ENCODE measurements at regions of chr1 and their contacts with region 1.

Region 1: DNA sequence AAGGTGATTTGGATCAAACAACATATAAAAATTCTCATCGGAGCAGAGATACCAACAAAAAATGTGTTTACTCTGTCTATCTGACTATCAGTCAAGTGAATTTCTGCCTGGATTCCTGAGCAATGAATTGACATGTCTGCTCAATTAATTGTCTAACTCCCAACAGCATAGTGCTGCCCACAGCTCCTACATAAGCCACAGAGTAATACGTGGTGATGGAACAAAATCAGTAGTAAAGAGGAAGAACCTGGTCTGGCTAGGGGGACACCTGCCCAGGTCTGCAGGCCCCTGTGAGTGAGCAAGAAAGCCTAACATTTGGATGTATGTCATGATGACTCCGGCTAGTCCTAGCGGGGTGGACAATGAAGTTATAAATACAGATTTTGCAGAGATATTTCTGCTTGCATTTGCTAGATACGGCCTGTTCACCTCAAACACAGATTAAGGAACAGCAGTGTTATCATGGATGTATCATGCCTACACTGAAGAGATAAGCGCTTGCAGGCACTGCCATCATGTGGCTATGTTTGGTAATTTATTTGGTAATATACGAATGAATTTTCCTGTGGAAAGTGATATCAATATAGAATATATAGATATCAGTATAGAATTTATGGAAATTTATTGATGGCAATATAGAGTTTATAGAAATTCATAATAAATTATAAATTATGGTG is 69.6 kb upstream of the LRRC8B start:
- DNase-seq: peak; percentile 48 to 76 (median 61)
- H3K4me3 ChIP-seq: no peak overlapping the region
- H3K4me3 Mint-ChIP-seq: no peak overlapping the region
- H3K27ac ChIP-seq: no peak overlapping the region
- H3K27ac Mint-ChIP-seq: no peak overlapping the region
- H3K4me1 ChIP-seq: peaks cover under 1 to 8% of the 10 kb centered on the region in 2 donors
- H3K4me1 Mint-ChIP-seq: peaks cover 12% of the 10 kb centered on the region
- H3K27me3 ChIP-seq: no peaks in the 10 kb centered on the region
- H3K27me3 Mint-ChIP-seq: peaks cover 2 to 5% (median 2%) of the 10 kb centered on the region in 3 donors
- CTCF ChIP-seq: peak; percentile 76

Region 2: DNA sequence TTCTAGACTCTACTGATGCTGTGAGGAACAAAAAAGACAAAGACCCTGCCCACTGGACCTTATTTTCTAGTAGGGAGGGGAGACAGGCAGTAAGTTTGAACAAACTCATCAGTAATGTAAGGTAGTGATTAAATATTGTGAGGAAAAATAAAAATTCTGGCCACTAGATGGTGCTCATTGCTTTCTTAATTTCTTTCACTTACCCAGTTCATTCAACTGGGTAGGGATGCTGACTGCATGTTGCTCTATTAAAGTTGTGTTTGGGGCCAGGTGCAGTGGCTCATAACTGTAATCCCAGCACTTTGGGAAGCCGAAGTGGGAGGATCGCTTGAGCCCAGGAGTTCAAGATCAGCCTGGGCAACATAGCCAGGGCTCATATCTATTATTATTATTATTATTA is 456.3 kb before region 1 on chr1:
- intact Hi-C with region 1: loop called in 1 of 2 experiments (anchors 5 kb)
- DNase-seq: peak; percentile 54 to 85 (median 62)
- H3K4me3 ChIP-seq: no peak overlapping the region
- H3K4me3 Mint-ChIP-seq: no peak overlapping the region
- H3K27ac ChIP-seq: no peak overlapping the region
- H3K27ac Mint-ChIP-seq: no peak overlapping the region
- H3K4me1 ChIP-seq: peaks cover 2% of the 10 kb centered on the region in 2 donors
- H3K4me1 Mint-ChIP-seq: peaks cover 1% of the 10 kb centered on the region
- H3K27me3 ChIP-seq: no peaks in the 10 kb centered on the region
- H3K27me3 Mint-ChIP-seq: no peaks in the 10 kb centered on the region
- CTCF ChIP-seq: peak; percentile 69

Region 3: DNA sequence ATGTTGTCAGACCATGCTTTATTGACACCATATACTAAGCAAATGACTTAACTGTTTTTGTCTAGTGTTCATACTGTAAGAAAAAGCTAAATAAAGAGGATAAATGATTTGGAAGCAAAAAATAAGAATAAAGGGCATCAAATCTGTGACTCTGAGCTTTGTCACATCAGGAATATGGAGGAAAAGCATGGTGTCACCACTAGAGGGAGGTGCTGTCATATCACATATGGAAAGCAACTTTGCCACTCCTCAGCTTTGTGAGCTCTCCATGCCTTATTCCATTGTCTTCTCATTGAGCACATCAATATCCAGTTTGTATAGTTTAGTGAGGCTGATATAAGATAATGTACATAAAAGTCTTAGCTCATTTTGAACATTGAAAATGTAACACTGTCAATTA is 369.2 kb before region 1 on chr1:
- intact Hi-C with region 1: loop called in 1 of 2 experiments (anchors 10 kb)
- DNase-seq: peak; percentile 53 to 69 (median 54)
- H3K4me3 ChIP-seq: no peak overlapping the region
- H3K4me3 Mint-ChIP-seq: no peak overlapping the region
- H3K27ac ChIP-seq: no peak overlapping the region
- H3K27ac Mint-ChIP-seq: no peak overlapping the region
- H3K4me1 ChIP-seq: peaks cover 6 to 10% of the 10 kb centered on the region in 2 donors
- H3K4me1 Mint-ChIP-seq: peaks cover 8% of the 10 kb centered on the region
- H3K27me3 ChIP-seq: no peaks in the 10 kb centered on the region
- H3K27me3 Mint-ChIP-seq: no peaks in the 10 kb centered on the region
- CTCF ChIP-seq: peak; percentile 74

Region 4: GRCh38 chr1:89433421-89433820 is 21.6 kb before region 1 on chr1:
- intact Hi-C with region 1: no loop called
- DNase-seq: no peak
- H3K4me3 ChIP-seq: no peak overlapping the region
- H3K4me3 Mint-ChIP-seq: no peak overlapping the region
- H3K27ac ChIP-seq: no peak overlapping the region
- H3K27ac Mint-ChIP-seq: no peak overlapping the region
- H3K4me1 ChIP-seq: peaks cover 12 to 15% of the 10 kb centered on the region in 2 donors
- H3K4me1 Mint-ChIP-seq: peaks cover 16% of the 10 kb centered on the region
- H3K27me3 ChIP-seq: no peaks in the 10 kb centered on the region
- H3K27me3 Mint-ChIP-seq: peaks cover 0 to 3% (median 0%) of the 10 kb centered on the region in 3 donors
- CTCF ChIP-seq: no peak

Region 5: GRCh38 chr1:89472952-89473351 is 18.0 kb after region 1 on chr1:
- intact Hi-C with region 1: no loop called
- DNase-seq: no peak
- H3K4me3 ChIP-seq: no peak overlapping the region
- H3K4me3 Mint-ChIP-seq: no peak overlapping the region
- H3K27ac ChIP-seq: no peak overlapping the region
- H3K27ac Mint-ChIP-seq: no peak overlapping the region
- H3K4me1 ChIP-seq: no peaks in the 10 kb centered on the region
- H3K4me1 Mint-ChIP-seq: no peaks in the 10 kb centered on the region
- H3K27me3 ChIP-seq: peaks cover 0 to 2% of the 10 kb centered on the region in 2 donors
- H3K27me3 Mint-ChIP-seq: peaks cover 0 to 7% (median 2%) of the 10 kb centered on the region in 3 donors
- CTCF ChIP-seq: no peak

Region 6: GRCh38 chr1:89552471-89553081 is 97.6 kb after region 1 on chr1:
- intact Hi-C with region 1: no loop called
- DNase-seq: peak; percentile 56 to 72 (median 64)
- H3K4me3 ChIP-seq: peak overlapping the region; percentile 16 to 72 (median 38)
- H3K4me3 Mint-ChIP-seq: peak overlapping the region; percentile 68 to 76
- H3K27ac ChIP-seq: peak overlapping the region; percentile 53 to 97
- H3K27ac Mint-ChIP-seq: peak overlapping the region; percentile 89 to 98 (median 95)
- H3K4me1 ChIP-seq: peaks cover 48 to 67% of the 10 kb centered on the region in 2 donors
- H3K4me1 Mint-ChIP-seq: peaks cover 50% of the 10 kb centered on the region
- H3K27me3 ChIP-seq: no peaks in the 10 kb centered on the region
- H3K27me3 Mint-ChIP-seq: no peaks in the 10 kb centered on the region
- CTCF ChIP-seq: no peak

Region 7: GRCh38 chr1:90045853-90046563 is 591.0 kb after region 1 on chr1:
- intact Hi-C with region 1: no loop called
- DNase-seq: no peak
- H3K4me3 ChIP-seq: no peak overlapping the region
- H3K4me3 Mint-ChIP-seq: no peak overlapping the region
- H3K27ac ChIP-seq: no peak overlapping the region
- H3K27ac Mint-ChIP-seq: no peak overlapping the region
- H3K4me1 ChIP-seq: no peaks in the 10 kb centered on the region
- H3K4me1 Mint-ChIP-seq: no peaks in the 10 kb centered on the region
- H3K27me3 ChIP-seq: no peaks in the 10 kb centered on the region
- H3K27me3 Mint-ChIP-seq: peaks cover 2 to 6% (median 5%) of the 10 kb centered on the region in 3 donors
- CTCF ChIP-seq: peak; percentile 46

Measured in CD14-positive monocyte (primary cell).